ENCODE measurements at regions of chr1 and their contacts with region 1.

Region 1: DNA sequence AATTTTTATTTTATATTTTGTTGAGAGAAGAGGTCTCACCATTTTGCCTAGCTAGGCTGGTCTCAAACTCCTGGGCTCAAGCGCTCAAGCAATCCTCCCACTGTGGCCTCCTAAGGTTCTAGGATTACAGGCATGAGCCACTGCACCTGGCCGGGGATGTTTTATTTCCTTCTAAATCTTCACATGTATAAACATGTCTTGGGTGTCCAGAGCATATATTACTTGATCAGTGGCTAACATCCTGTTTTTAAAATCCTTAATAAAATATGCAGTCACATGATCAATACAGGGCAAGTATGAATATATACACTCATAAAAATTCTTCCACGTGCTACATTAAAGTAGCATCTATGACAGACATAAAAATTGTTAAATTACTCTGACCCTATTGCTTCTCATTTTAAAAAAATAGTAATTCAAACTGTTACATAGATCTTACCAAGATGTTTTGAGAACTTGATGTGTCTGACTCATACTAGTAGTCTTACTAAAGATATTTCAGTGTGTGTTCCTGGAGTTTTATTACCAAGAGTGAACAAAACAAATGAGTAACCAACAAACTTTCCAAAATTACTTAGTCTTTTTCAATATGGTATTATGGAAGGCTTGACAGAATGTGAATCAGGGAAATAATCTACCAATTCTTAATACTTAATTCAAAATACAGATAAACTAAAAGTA is 222.5 kb downstream of the SLC45A1 start:
- DNase-seq: peak; percentile 88
- H3K4me3 ChIP-seq: no peak overlapping the region
- H3K27ac ChIP-seq: peak overlapping the region; percentile 95
- H3K4me1 ChIP-seq: peaks cover 17% of the 10 kb centered on the region
- H3K27me3 ChIP-seq: no peaks in the 10 kb centered on the region
- CTCF ChIP-seq: no peak

Region 2: DNA sequence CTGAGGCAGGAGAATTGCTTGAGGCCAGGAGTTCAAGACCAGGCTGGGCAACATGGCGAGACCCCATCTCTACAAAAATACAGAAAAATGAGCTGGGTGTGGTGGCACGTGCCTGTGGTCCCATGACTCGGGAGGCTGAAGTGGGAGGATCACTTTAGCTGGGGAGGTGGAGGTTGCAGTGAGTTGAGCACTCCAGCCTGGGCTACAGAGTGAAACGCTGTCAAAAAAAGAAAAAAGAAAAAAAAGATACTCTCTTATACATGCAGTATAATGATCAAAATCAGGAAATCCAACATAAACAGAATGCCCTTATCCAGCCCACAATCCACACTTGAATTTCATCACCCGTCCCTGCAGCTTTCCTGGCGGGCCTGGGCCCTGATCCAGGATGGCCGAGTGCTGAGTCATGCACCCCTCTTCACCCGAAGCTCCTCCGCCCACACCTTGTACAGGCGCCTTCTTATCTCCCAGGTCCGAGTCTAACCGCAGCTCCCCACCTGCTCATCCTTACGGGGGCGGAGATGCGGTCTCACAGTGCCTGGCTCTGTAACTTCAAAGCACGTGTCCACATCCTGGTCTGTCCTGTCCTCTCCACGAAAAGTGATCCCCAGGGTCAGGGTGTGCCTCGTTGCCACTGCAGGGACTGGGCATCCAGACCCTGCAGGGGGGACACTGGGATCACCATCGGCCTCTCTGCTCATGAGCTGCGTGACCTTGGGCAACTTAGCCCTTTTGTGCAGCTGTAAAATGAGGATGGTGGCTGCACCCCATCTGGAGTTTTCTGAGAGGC is 342.7 kb before region 1 on chr1:
- CTCF ChIA-PET with region 1: no interaction called
- dilution Hi-C with region 1: no loop called
- in situ Hi-C with region 1: no loop called
- intact Hi-C with region 1: no loop called
- DNase-seq: peak; percentile 94
- H3K4me3 ChIP-seq: no peak overlapping the region
- H3K27ac ChIP-seq: peak overlapping the region; percentile 25
- H3K4me1 ChIP-seq: peaks cover 45% of the 10 kb centered on the region
- H3K27me3 ChIP-seq: no peaks in the 10 kb centered on the region
- CTCF ChIP-seq: no peak

Region 3: DNA sequence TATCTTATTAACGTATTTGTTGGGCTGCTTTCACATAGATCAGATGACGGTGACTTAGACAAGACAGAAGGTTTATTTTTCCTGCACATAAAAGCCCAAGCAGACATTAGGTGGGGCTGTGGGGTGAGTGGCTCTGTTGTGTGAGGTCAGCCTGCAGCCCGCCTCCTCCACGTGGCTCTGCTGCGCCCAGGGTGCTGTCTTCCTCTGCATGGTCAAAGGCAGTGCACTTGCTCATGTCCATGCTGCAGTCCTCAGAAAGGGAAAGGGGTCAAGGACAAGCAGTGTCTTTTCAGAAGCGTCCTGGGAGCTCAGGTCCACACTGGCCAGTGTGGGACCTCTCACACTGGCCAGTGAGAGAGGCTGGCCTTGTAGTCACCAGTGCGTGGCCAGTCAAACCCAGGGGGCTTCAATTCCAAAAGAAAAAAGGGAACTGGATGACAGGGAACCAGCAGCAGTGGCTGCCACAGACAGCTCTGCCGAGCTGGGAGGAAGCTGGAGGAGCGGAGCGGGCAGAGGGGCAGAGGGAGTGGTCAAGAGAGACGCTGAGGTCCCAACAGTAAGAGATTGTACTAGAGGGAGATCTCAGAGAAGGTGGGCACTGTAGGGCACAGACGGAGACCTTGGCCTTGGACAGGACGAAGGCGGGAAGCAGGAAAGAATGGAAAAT is 258.4 kb before region 1 on chr1:
- CTCF ChIA-PET with region 1: no interaction called
- dilution Hi-C with region 1: no loop called
- in situ Hi-C with region 1: no loop called
- intact Hi-C with region 1: no loop called
- DNase-seq: no peak
- H3K4me3 ChIP-seq: no peak overlapping the region
- H3K27ac ChIP-seq: no peak overlapping the region
- H3K4me1 ChIP-seq: peaks cover 7% of the 10 kb centered on the region
- H3K27me3 ChIP-seq: no peaks in the 10 kb centered on the region
- CTCF ChIP-seq: no peak

Region 4: DNA sequence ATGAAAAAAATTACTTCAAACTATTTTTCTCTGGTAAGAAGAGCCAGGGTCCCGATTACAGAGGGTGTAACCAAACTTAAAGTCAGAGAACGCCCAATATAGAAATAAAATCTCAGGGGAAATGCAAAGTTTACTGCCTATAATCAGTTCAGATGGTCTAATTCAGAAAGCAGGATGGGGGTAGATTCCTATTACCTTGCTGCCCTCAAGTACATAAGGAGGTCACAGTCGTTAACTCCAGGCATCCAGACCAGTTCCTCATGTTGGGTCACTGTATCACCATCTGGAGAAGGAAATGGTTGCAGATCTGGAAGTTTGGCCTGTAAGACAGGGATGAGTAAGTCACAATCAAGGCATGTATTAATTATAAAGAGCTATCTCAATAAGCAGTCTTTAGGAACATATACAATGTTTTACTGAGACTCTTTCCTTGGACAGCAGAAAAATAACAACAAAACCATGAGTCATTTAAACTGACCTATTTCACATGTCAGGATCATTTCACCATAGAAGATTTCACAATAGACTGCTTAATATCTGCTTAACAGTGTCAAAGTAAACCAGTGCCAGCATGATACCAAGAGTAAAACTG is 43.1 kb before region 1 on chr1:
- CTCF ChIA-PET with region 1: no interaction called
- dilution Hi-C with region 1: no loop called
- in situ Hi-C with region 1: no loop called
- intact Hi-C with region 1: no loop called
- DNase-seq: peak; percentile 55
- H3K4me3 ChIP-seq: no peak overlapping the region
- H3K27ac ChIP-seq: no peak overlapping the region
- H3K4me1 ChIP-seq: peaks cover 2% of the 10 kb centered on the region
- H3K27me3 ChIP-seq: no peaks in the 10 kb centered on the region
- CTCF ChIP-seq: no peak

Region 5: GRCh38 chr1:8525558-8526275 is 14.7 kb before region 1 on chr1:
- CTCF ChIA-PET with region 1: no interaction called
- dilution Hi-C with region 1: no loop called
- in situ Hi-C with region 1: no loop called
- intact Hi-C with region 1: loop called (anchors 1 kb)
- DNase-seq: peak; percentile 95
- H3K4me3 ChIP-seq: peak overlapping the region; percentile 62 to 70 (median 63)
- H3K27ac ChIP-seq: peak overlapping the region; percentile 93
- H3K4me1 ChIP-seq: peaks cover 32% of the 10 kb centered on the region
- H3K27me3 ChIP-seq: no peaks in the 10 kb centered on the region
- CTCF ChIP-seq: no peak

Region 6: GRCh38 chr1:8629241-8630091 is 89.1 kb after region 1 on chr1:
- CTCF ChIA-PET with region 1: no interaction called
- dilution Hi-C with region 1: no loop called
- in situ Hi-C with region 1: no loop called
- intact Hi-C with region 1: no loop called
- DNase-seq: no peak
- H3K4me3 ChIP-seq: no peak overlapping the region
- H3K27ac ChIP-seq: no peak overlapping the region
- H3K4me1 ChIP-seq: peaks cover 15% of the 10 kb centered on the region
- H3K27me3 ChIP-seq: no peaks in the 10 kb centered on the region
- CTCF ChIP-seq: no peak

Measured in mammary epithelial cell (primary cell).